ENCODE measurements at regions of chr4 and their contacts with region 1.

Region 1: GRCh38 chr4:185082561-185082960 is 60.5 kb upstream of the SLC25A4 start:
- DNase-seq: no peak
- ATAC-seq: no peak
- H3K4me3 ChIP-seq: no peak overlapping the region
- H3K4me3 Mint-ChIP-seq: no peak overlapping the region
- H3K27ac ChIP-seq: no peak overlapping the region
- H3K27ac Mint-ChIP-seq: no peak overlapping the region
- H3K4me1 ChIP-seq: no peaks in the 10 kb centered on the region
- H3K4me1 Mint-ChIP-seq: no peaks in the 10 kb centered on the region
- H3K27me3 ChIP-seq: peaks cover 0 to 8% (median 4%) of the 10 kb centered on the region in 4 experiments
- H3K27me3 Mint-ChIP-seq: peaks cover 47% of the 10 kb centered on the region
- CTCF ChIP-seq: no peak

Region 2: GRCh38 chr4:184424993-184425758 is 657.4 kb before region 1 on chr4:
- CTCF ChIA-PET with region 1: no interaction called
- POLR2A ChIA-PET with region 1: no interaction called
- intact Hi-C with region 1: no loop called
- DNase-seq: no peak
- ATAC-seq: no peak
- H3K4me3 ChIP-seq: no peak overlapping the region
- H3K4me3 Mint-ChIP-seq: no peak overlapping the region
- H3K27ac ChIP-seq: no peak overlapping the region
- H3K27ac Mint-ChIP-seq: peak overlapping the region; percentile 27
- H3K4me1 ChIP-seq: peaks cover 21% of the 10 kb centered on the region in 2 donors
- H3K4me1 Mint-ChIP-seq: peaks cover 64% of the 10 kb centered on the region
- H3K27me3 ChIP-seq: no peaks in the 10 kb centered on the region
- H3K27me3 Mint-ChIP-seq: no peaks in the 10 kb centered on the region
- CTCF ChIP-seq: no peak

Region 3: GRCh38 chr4:185096032-185096653 is 13.6 kb after region 1 on chr4:
- CTCF ChIA-PET with region 1: interaction called, 10 read pairs
- POLR2A ChIA-PET with region 1: no interaction called
- intact Hi-C with region 1: no loop called
- DNase-seq: peak; percentile 27
- ATAC-seq: no peak
- H3K4me3 ChIP-seq: no peak overlapping the region
- H3K4me3 Mint-ChIP-seq: no peak overlapping the region
- H3K27ac ChIP-seq: no peak overlapping the region
- H3K27ac Mint-ChIP-seq: no peak overlapping the region
- H3K4me1 ChIP-seq: no peaks in the 10 kb centered on the region
- H3K4me1 Mint-ChIP-seq: no peaks in the 10 kb centered on the region
- H3K27me3 ChIP-seq: peaks cover 0 to 8% (median 4%) of the 10 kb centered on the region in 4 experiments
- H3K27me3 Mint-ChIP-seq: peaks cover 17% of the 10 kb centered on the region
- CTCF ChIP-seq: peak; percentile 66

Measured in B cell (primary cell).